CD4-positive, alpha-beta memory T cell (primary cell): ENCODE measurements at regions of chr1 and their contacts with region 1.

Region 1: GRCh38 chr1:93179886-93180722 is at the start of gene TMED5:
- DNase-seq: peak; percentile 97 to 98 (median 97)
- H3K4me3 ChIP-seq: peak within 1 kb of the TSS; percentile 84 to 99
- H3K4me3 Mint-ChIP-seq: peak within 1 kb of the TSS; percentile 89 to 99 (median 93)
- H3K27ac ChIP-seq: peak within 1 kb of the TSS; percentile 98
- H3K27ac Mint-ChIP-seq: peak within 1 kb of the TSS; percentile 90 to 99 (median 96)
- H3K4me1 ChIP-seq: peaks cover 59% of the 10 kb centered on the region
- H3K4me1 Mint-ChIP-seq: peaks cover 26 to 70% (median 41%) of the 10 kb centered on the region in 4 donors
- H3K27me3 ChIP-seq: no peaks in the 10 kb centered on the region
- H3K27me3 Mint-ChIP-seq: no peaks in the 10 kb centered on the region
- total RNA-seq, gene TMED5: 60.1 to 60.8 TPM

Region 2: DNA sequence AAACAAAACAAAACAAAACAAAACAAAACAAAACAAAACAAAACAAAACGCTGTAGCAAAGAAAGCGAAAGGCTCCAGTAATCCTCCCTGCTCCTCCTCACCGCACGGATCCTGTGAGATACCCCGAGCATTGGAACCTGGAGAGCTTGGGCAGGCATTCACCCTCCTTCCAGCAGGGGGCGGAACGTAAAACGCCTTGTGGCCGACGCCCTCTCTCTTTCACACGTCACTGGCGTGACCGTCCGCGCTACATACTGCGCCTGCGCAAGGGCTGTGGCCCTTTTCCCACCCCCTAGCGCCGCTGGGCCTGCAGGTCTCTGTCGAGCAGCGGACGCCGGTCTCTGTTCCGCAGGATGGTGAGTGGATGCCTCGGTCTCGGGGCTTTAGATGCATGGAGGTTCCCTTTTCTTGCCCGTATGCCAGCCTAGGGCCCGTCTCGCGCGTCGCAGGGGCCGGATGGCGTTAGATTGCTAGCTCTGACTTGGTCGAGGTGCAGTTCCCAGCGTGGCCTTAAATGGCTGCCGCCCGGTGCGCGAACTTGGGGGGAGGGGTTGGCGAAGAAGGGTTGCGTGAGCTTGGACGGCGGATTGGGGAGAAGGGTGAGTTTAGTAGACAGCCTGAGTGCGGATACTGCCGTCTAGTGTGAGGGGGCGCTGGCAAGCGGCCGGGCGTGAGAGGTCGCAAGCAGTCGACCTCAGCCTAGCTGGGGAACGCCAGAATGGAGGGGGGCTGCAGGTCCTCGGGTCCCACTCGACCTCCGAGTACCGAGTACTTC is 348.2 kb before region 1 on chr1 and contains the start of gene RPL5:
- CTCF ChIA-PET with region 1: no interaction called
- POLR2A ChIA-PET with region 1: interaction called, 3 read pairs
- intact Hi-C with region 1: loop called (anchors 1 kb)
- DNase-seq: peak; percentile 97 to 100 (median 98)
- H3K4me3 ChIP-seq: peak within 1 kb of the TSS; percentile 54 to 100
- H3K4me3 Mint-ChIP-seq: peak within 1 kb of the TSS; percentile 98 to 100 (median 100)
- H3K27ac ChIP-seq: peak within 1 kb of the TSS; percentile 93
- H3K27ac Mint-ChIP-seq: peak within 1 kb of the TSS; percentile 98 to 100 (median 99)
- H3K4me1 ChIP-seq: peaks cover 46% of the 10 kb centered on the region
- H3K4me1 Mint-ChIP-seq: peaks cover 35 to 55% (median 45%) of the 10 kb centered on the region in 4 donors
- H3K27me3 ChIP-seq: no peaks in the 10 kb centered on the region
- H3K27me3 Mint-ChIP-seq: peaks cover 0 to 1% of the 10 kb centered on the region in 2 donors
- total RNA-seq, gene RPL5: 1,501 to 1,588 TPM

Region 3: GRCh38 chr1:93155335-93155734 is 24.8 kb before region 1 on chr1:
- CTCF ChIA-PET with region 1: no interaction called
- POLR2A ChIA-PET with region 1: no interaction called
- intact Hi-C with region 1: loop called (anchors 2 kb)
- DNase-seq: no peak
- H3K4me3 ChIP-seq: no peak overlapping the region
- H3K4me3 Mint-ChIP-seq: no peak overlapping the region
- H3K27ac ChIP-seq: no peak overlapping the region
- H3K27ac Mint-ChIP-seq: peak overlapping the region; percentile 37 to 81 (median 63)
- H3K4me1 ChIP-seq: peaks cover 6% of the 10 kb centered on the region
- H3K4me1 Mint-ChIP-seq: peaks cover 4 to 13% (median 11%) of the 10 kb centered on the region in 4 donors
- H3K27me3 ChIP-seq: no peaks in the 10 kb centered on the region
- H3K27me3 Mint-ChIP-seq: no peaks in the 10 kb centered on the region

Region 4: DNA sequence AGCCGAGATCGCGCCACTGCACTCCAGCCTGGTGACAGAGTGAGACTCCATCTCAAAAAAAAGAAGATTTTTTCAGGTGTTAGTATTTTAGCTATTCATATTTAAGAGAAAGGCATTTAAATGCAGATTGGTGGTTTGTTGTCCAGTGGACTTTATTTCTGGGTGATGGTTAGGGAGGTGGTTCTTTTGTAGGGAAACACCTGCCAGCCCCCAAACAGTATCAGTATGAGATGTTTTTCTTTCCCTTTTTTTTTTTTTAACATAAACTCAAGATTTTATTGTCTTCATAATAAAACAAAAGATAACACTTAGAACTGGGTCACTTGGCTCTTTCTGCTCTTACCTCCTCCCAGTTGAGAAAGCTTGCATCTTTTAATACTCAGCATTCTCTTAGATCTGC is 10.3 kb after region 1 on chr1:
- CTCF ChIA-PET with region 1: no interaction called
- POLR2A ChIA-PET with region 1: no interaction called
- intact Hi-C with region 1: no loop called
- DNase-seq: no peak
- H3K4me3 ChIP-seq: no peak overlapping the region
- H3K4me3 Mint-ChIP-seq: no peak overlapping the region
- H3K27ac ChIP-seq: no peak overlapping the region
- H3K27ac Mint-ChIP-seq: peak overlapping the region in 1 of 7 donors; percentile 32
- H3K4me1 ChIP-seq: peaks cover under 1% of the 10 kb centered on the region
- H3K4me1 Mint-ChIP-seq: peaks cover 4 to 23% (median 11%) of the 10 kb centered on the region in 4 donors
- H3K27me3 ChIP-seq: no peaks in the 10 kb centered on the region
- H3K27me3 Mint-ChIP-seq: no peaks in the 10 kb centered on the region

Region 5: GRCh38 chr1:93345633-93346420 is 165.7 kb after region 1 on chr1 and contains the start of gene DR1:
- CTCF ChIA-PET with region 1: no interaction called
- POLR2A ChIA-PET with region 1: interaction called, 6 read pairs
- intact Hi-C with region 1: loop called (anchors 1 kb)
- DNase-seq: peak; percentile 87 to 92 (median 89)
- H3K4me3 ChIP-seq: peak within 1 kb of the TSS; percentile 80 to 100
- H3K4me3 Mint-ChIP-seq: peak within 1 kb of the TSS; percentile 96 to 99 (median 98)
- H3K27ac ChIP-seq: peak within 1 kb of the TSS; percentile 91
- H3K27ac Mint-ChIP-seq: peak within 1 kb of the TSS; percentile 95 to 99 (median 98)
- H3K4me1 ChIP-seq: peaks cover 46% of the 10 kb centered on the region
- H3K4me1 Mint-ChIP-seq: peaks cover 23 to 59% (median 30%) of the 10 kb centered on the region in 4 donors
- H3K27me3 ChIP-seq: no peaks in the 10 kb centered on the region
- H3K27me3 Mint-ChIP-seq: no peaks in the 10 kb centered on the region
- total RNA-seq, gene DR1: 71.8 to 71.9 TPM

Region 6: GRCh38 chr1:95072532-95073419 is 1892.7 kb after region 1 on chr1 and contains the start of gene ALG14:
- CTCF ChIA-PET with region 1: no interaction called
- POLR2A ChIA-PET with region 1: no interaction called
- intact Hi-C with region 1: loop called (anchors 2 kb)
- DNase-seq: peak; percentile 94 to 96 (median 95)
- H3K4me3 ChIP-seq: peak within 1 kb of the TSS; percentile 93 to 96
- H3K4me3 Mint-ChIP-seq: peak within 1 kb of the TSS; percentile 96 to 99 (median 98)
- H3K27ac ChIP-seq: peak within 1 kb of the TSS; percentile 83
- H3K27ac Mint-ChIP-seq: peak within 1 kb of the TSS; percentile 96 to 99 (median 98)
- H3K4me1 ChIP-seq: peaks cover 14% of the 10 kb centered on the region
- H3K4me1 Mint-ChIP-seq: peaks cover 12 to 21% (median 18%) of the 10 kb centered on the region in 4 donors
- H3K27me3 ChIP-seq: no peaks in the 10 kb centered on the region
- H3K27me3 Mint-ChIP-seq: peaks cover 2 to 5% of the 10 kb centered on the region in 2 donors
- total RNA-seq, gene ALG14: 1.1 to 3.2 TPM